B cell (primary cell): ENCODE measurements at regions of chr9 and their contacts with region 1.

Region 1: DNA sequence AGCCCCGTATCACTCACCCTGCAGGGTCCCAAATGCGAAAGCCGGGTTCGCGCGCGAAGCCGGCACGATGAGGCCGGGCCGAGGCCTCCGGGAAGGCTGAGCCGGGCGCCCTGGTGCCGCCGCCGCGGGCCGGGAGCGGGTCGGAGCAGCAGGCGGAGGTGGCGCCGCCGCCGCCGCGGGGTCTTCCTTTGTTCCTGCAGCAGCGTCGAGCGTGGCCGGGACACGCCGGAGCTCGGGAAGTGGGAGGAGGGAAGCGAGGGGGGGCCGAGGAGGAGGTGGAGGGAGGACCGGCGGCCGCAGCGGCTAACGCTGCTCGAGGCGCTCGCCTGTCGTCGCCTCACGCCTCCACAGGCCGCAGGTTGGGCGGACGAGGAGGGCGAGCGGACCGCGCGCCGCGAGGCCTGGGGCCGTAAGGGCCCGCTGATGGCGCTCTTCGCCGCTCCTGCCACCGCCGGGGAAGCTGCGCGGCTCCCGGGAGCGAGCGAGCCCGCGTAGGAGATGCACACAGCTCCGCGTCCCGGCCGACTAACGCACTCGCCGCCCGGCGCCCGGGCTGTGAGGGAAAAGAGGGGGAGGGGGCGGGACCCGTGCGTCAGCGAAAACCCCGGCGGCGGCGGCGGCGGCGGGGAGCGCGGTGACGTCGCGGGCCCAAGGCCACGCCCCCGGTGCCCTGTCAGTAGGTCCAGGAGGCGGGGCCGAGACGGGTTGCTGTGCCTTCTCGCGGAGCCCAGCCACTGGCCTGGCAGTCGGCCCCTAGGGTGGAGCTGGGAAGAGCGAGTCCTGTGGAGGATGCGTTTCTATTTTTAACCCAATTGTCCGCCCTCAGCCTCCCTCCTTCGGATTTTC is at the start of gene ZFAND5:
- DNase-seq: peak; percentile 97
- ATAC-seq: peak; percentile 78
- H3K4me3 ChIP-seq: peak within 1 kb of the TSS; percentile 71 to 95 (median 80)
- H3K4me3 Mint-ChIP-seq: peak within 1 kb of the TSS; percentile 95
- H3K27ac ChIP-seq: peak within 1 kb of the TSS; percentile 99 to 100
- H3K27ac Mint-ChIP-seq: peak within 1 kb of the TSS; percentile 97
- H3K4me1 ChIP-seq: peaks cover 22 to 24% of the 10 kb centered on the region in 2 donors
- H3K4me1 Mint-ChIP-seq: peaks cover 40% of the 10 kb centered on the region
- H3K27me3 ChIP-seq: no peaks in the 10 kb centered on the region
- H3K27me3 Mint-ChIP-seq: no peaks in the 10 kb centered on the region
- CTCF ChIP-seq: no peak
- total RNA-seq, gene ZFAND5: 93.8 and 95.3 TPM in 2 replicates

Region 2: GRCh38 chr9:71795097-71795813 is 569.6 kb before region 1 on chr9:
- CTCF ChIA-PET with region 1: no interaction called
- POLR2A ChIA-PET with region 1: no interaction called
- intact Hi-C with region 1: loop called (anchors 10 kb)
- DNase-seq: peak; percentile 87
- ATAC-seq: peak; percentile 87
- H3K4me3 ChIP-seq: peak overlapping the region in 1 of 5 experiments; percentile 40
- H3K4me3 Mint-ChIP-seq: peak overlapping the region; percentile 92
- H3K27ac ChIP-seq: peak overlapping the region; percentile 84 to 92
- H3K27ac Mint-ChIP-seq: peak overlapping the region; percentile 93
- H3K4me1 ChIP-seq: peaks cover 77 to 80% of the 10 kb centered on the region in 2 donors
- H3K4me1 Mint-ChIP-seq: peaks cover 70% of the 10 kb centered on the region
- H3K27me3 ChIP-seq: no peaks in the 10 kb centered on the region
- H3K27me3 Mint-ChIP-seq: no peaks in the 10 kb centered on the region
- CTCF ChIP-seq: no peak

Region 3: GRCh38 chr9:72013292-72013760 is 351.6 kb before region 1 on chr9:
- CTCF ChIA-PET with region 1: no interaction called
- POLR2A ChIA-PET with region 1: no interaction called
- intact Hi-C with region 1: no loop called
- DNase-seq: no peak
- ATAC-seq: no peak
- H3K4me3 ChIP-seq: no peak overlapping the region
- H3K4me3 Mint-ChIP-seq: no peak overlapping the region
- H3K27ac ChIP-seq: no peak overlapping the region
- H3K27ac Mint-ChIP-seq: no peak overlapping the region
- H3K4me1 ChIP-seq: no peaks in the 10 kb centered on the region
- H3K4me1 Mint-ChIP-seq: no peaks in the 10 kb centered on the region
- H3K27me3 ChIP-seq: no peaks in the 10 kb centered on the region
- H3K27me3 Mint-ChIP-seq: peaks cover 4% of the 10 kb centered on the region
- CTCF ChIP-seq: no peak

Region 4: GRCh38 chr9:72292256-72292682 is 72.6 kb before region 1 on chr9:
- CTCF ChIA-PET with region 1: interaction called, 3 read pairs
- POLR2A ChIA-PET with region 1: interaction called, 5 read pairs
- intact Hi-C with region 1: loop called (anchors 5 kb)
- DNase-seq: peak; percentile 56
- ATAC-seq: peak; percentile 31
- H3K4me3 ChIP-seq: no peak overlapping the region
- H3K4me3 Mint-ChIP-seq: no peak overlapping the region
- H3K27ac ChIP-seq: no peak overlapping the region
- H3K27ac Mint-ChIP-seq: no peak overlapping the region
- H3K4me1 ChIP-seq: peaks cover 7 to 19% of the 10 kb centered on the region in 2 donors
- H3K4me1 Mint-ChIP-seq: peaks cover 16% of the 10 kb centered on the region
- H3K27me3 ChIP-seq: peaks cover 0 to 5% (median 0%) of the 10 kb centered on the region in 4 experiments
- H3K27me3 Mint-ChIP-seq: peaks cover 10% of the 10 kb centered on the region
- CTCF ChIP-seq: peak; percentile 78

Region 5: DNA sequence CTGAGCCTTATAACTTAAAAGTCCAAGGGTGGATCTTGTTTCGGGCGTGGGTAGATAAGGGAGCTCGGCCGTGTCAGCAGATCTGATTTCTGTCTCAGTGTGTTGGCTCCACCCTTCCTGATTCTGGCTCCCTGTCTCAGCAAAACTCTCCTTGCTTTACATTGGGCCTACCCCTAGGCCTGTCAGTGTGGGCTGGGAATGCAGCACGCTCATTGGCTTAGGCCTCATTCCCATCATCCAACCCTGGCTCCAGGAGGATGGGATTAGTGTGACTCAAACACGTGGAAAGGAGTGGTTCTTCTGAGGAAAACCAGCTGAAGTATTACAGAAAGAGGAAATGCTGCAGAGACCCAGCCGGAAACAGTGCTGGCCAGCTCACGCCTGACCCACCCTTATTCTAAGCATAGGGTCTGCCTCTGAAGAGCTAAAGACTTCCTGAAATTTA is 59.8 kb before region 1 on chr9:
- CTCF ChIA-PET with region 1: interaction called, 4 read pairs
- POLR2A ChIA-PET with region 1: interaction called, 8 read pairs
- intact Hi-C with region 1: loop called (anchors 2 kb)
- DNase-seq: peak; percentile 78
- ATAC-seq: peak; percentile 85
- H3K4me3 ChIP-seq: peak overlapping the region; percentile 36 to 77 (median 48)
- H3K4me3 Mint-ChIP-seq: peak overlapping the region; percentile 90
- H3K27ac ChIP-seq: peak overlapping the region; percentile 88 to 94
- H3K27ac Mint-ChIP-seq: peak overlapping the region; percentile 94
- H3K4me1 ChIP-seq: peaks cover 55 to 68% of the 10 kb centered on the region in 2 donors
- H3K4me1 Mint-ChIP-seq: peaks cover 59% of the 10 kb centered on the region
- H3K27me3 ChIP-seq: no peaks in the 10 kb centered on the region
- H3K27me3 Mint-ChIP-seq: no peaks in the 10 kb centered on the region
- CTCF ChIP-seq: no peak

Region 6: DNA sequence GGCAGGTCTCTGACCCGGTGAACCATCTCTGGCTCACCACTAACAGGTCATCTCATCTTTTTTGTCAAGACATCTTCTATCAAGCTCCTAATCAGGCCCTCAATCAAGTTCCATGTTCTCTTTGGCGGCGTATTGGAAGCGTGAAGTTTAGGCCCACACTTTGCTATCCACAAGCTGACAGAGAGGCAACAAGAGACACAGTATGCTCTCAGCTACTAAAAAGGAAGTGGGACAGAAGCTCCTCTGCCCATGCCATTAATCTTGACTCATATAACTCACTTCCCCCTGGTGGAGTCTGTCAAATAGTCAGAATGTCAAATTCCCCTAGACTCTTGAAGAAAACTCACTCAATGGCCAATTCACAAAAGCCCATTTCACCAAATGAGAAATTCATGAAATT is 79.0 kb after region 1 on chr9:
- CTCF ChIA-PET with region 1: interaction called, 3 read pairs
- POLR2A ChIA-PET with region 1: interaction called, 4 read pairs
- intact Hi-C with region 1: loop called (anchors 2 kb)
- DNase-seq: peak; percentile 67
- ATAC-seq: peak; percentile 81
- H3K4me3 ChIP-seq: no peak overlapping the region
- H3K4me3 Mint-ChIP-seq: peak overlapping the region; percentile 20
- H3K27ac ChIP-seq: peak overlapping the region; percentile 5 to 19
- H3K27ac Mint-ChIP-seq: peak overlapping the region; percentile 77
- H3K4me1 ChIP-seq: peaks cover 26 to 33% of the 10 kb centered on the region in 2 donors
- H3K4me1 Mint-ChIP-seq: peaks cover 31% of the 10 kb centered on the region
- H3K27me3 ChIP-seq: no peaks in the 10 kb centered on the region
- H3K27me3 Mint-ChIP-seq: no peaks in the 10 kb centered on the region
- CTCF ChIP-seq: peak; percentile 31